ENCODE measurements at regions of chr11 and their contacts with region 1.

Region 1: GRCh38 chr11:16186680-16187079 is 169.7 kb downstream of the SOX6 start:
- DNase-seq: no peak
- ATAC-seq: no peak

Region 2: DNA sequence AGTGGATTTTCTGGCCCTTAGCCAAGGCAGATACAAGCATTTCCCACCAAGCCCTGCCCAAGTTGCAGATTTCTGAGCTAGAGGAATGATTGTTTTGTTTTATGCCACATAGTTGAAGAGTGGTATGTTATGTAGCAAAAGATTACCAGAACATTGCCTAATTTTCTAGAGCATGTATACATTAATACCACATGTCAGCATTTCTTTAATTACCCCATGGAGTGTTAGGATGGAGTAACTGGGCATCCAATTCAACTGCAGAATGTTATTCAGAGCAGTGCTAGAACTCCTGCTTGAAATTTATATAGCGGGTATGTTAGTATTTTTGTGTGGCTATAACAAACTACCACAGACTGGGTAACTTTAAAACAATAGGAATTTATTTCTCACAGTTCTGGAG is 1270.3 kb before region 1 on chr11:
- intact Hi-C with region 1: loop called (anchors 5 kb)
- DNase-seq: no peak
- ATAC-seq: no peak

Region 3: GRCh38 chr11:15871904-15872653 is 314.6 kb before region 1 on chr11:
- intact Hi-C with region 1: no loop called
- DNase-seq: no peak
- ATAC-seq: no peak

Region 4: GRCh38 chr11:16133873-16134272 is 52.8 kb before region 1 on chr11:
- intact Hi-C with region 1: no loop called
- DNase-seq: no peak
- ATAC-seq: no peak

Measured in sciatic nerve (tissue), 2 donors.